A549 (cell line): ENCODE measurements at regions of chr6 and their contacts with region 1.

Region 1: DNA sequence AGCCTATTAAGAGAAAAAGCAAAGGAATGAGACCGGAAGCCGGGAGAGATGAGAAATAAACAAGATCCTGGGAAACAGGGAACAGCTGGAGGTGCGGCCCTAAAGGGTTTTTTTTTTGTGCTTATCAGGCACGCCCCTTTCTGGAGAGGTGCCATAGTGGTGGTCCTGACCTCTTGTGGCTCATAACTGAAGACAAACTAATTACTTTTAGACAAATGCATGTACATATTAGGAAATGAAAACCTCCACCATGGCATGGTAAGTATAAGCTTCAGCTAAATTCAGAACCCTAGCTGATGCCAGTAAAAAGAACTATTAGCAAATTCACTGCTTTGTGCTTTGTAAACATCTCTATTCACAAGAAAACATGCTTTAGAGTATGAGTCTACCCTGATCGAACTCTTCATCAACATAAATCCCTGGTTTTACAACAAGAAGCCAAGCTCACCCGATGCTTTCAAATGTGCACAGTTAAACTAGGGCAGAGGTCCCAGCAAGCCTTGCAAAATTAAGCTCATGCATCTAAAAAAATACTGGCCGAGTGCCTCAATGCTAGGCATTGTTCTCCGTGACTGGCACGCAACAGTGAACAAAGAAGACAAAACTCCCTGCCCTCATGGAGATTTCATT is 96.4 kb upstream of the MRPS10 start:
- DNase-seq: no peak
- ATAC-seq: no peak
- H3K4me3 ChIP-seq: no peak overlapping the region
- H3K27ac ChIP-seq: peak overlapping the region; percentile 92 to 94
- H3K4me1 ChIP-seq: peaks cover 51% of the 10 kb centered on the region
- CTCF ChIP-seq: no peak
- EP300 ChIP-seq: no peak
- POLR2A ChIP-seq: no peak
- RAD21 ChIP-seq: no peak

Region 2: GRCh38 chr6:42177514-42178364 is 136.3 kb before region 1 on chr6:
- CTCF ChIA-PET with region 1: no interaction called
- POLR2A ChIA-PET with region 1: no interaction called
- DNase-seq: no peak
- ATAC-seq: no peak
- H3K4me3 ChIP-seq: no peak overlapping the region
- H3K27ac ChIP-seq: no peak overlapping the region
- H3K4me1 ChIP-seq: peaks cover 5% of the 10 kb centered on the region; the same call in 1 of the 3 replicates
- CTCF ChIP-seq: no peak
- EP300 ChIP-seq: no peak
- POLR2A ChIP-seq: no peak
- RAD21 ChIP-seq: no peak

Region 3: DNA sequence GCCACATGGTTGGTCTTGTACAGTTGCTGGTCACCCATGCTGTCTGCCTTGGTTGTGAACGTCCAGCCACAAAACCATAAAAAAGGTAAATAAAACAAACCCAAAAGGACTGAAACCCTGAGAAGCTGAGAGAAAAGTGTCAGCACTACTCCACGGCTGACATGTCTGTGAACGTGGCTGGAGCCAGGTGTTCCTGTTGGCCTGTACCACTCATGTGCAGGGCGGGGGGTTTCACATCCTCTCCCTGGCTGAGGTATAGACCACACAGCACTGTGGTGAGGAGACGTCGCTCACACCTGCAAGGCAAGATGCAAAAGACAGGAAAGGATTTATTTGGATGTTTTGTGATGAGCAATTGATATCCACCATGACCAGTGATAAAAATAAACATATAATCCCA is 44.5 kb before region 1 on chr6:
- CTCF ChIA-PET with region 1: no interaction called
- POLR2A ChIA-PET with region 1: no interaction called
- DNase-seq: no peak
- ATAC-seq: no peak
- H3K4me3 ChIP-seq: no peak overlapping the region
- H3K27ac ChIP-seq: no peak overlapping the region
- H3K4me1 ChIP-seq: no peaks in the 10 kb centered on the region
- CTCF ChIP-seq: no peak
- EP300 ChIP-seq: no peak
- POLR2A ChIP-seq: no peak
- RAD21 ChIP-seq: no peak

Region 4: GRCh38 chr6:42294759-42295158 is 19.3 kb before region 1 on chr6:
- CTCF ChIA-PET with region 1: interaction called, 15 read pairs
- POLR2A ChIA-PET with region 1: no interaction called
- DNase-seq: peak; percentile 52 to 69
- ATAC-seq: peak; percentile 91 to 95
- H3K4me3 ChIP-seq: no peak overlapping the region
- H3K27ac ChIP-seq: peak overlapping the region; percentile 59 to 70; a peak in 5 of 6 replicates
- H3K4me1 ChIP-seq: peaks cover 29% of the 10 kb centered on the region
- CTCF ChIP-seq: no peak
- EP300 ChIP-seq: no peak
- POLR2A ChIP-seq: no peak
- RAD21 ChIP-seq: no peak